A673 (cell line): ENCODE measurements at regions of chr1 and their contacts with region 1.

Region 1: GRCh38 chr1:60149251-60149650 is 75.7 kb upstream of the C1orf87 start:
- DNase-seq: peak; percentile 16
- H3K4me3 ChIP-seq: no peak overlapping the region
- H3K27ac ChIP-seq: no peak overlapping the region
- H3K4me1 ChIP-seq: no peaks in the 10 kb centered on the region
- H3K27me3 ChIP-seq: peaks cover 16% of the 10 kb centered on the region
- CTCF ChIP-seq: no peak

Region 2: GRCh38 chr1:59682396-59683080 is 466.7 kb before region 1 on chr1:
- CTCF ChIA-PET with region 1: no interaction called
- POLR2A ChIA-PET with region 1: no interaction called
- intact Hi-C with region 1: no loop called
- DNase-seq: no peak
- H3K4me3 ChIP-seq: no peak overlapping the region
- H3K27ac ChIP-seq: no peak overlapping the region
- H3K4me1 ChIP-seq: peaks cover 14% of the 10 kb centered on the region
- H3K27me3 ChIP-seq: no peaks in the 10 kb centered on the region
- CTCF ChIP-seq: no peak

Region 3: DNA sequence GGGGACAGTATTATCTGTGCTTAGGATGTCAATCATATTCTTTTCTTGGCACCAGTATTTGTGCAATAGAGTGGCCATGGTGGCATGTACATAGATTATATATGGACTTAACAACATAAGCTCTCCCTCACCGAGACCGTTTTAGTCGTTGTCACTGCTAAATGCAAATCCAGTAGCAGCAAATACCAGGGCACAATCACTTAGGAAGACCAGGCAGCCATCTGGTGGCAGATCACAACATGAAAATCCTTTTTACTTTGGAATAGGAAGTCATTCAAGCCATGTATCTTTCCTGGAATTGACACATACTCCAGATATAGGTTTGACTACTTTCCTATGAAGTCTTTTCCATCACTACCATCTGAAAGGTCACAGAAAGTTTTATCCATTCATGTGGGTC is 22.5 kb before region 1 on chr1:
- CTCF ChIA-PET with region 1: interaction called, 10 read pairs
- POLR2A ChIA-PET with region 1: no interaction called
- intact Hi-C with region 1: no loop called
- DNase-seq: peak; percentile 45
- H3K4me3 ChIP-seq: no peak overlapping the region
- H3K27ac ChIP-seq: no peak overlapping the region
- H3K4me1 ChIP-seq: no peaks in the 10 kb centered on the region
- H3K27me3 ChIP-seq: no peaks in the 10 kb centered on the region
- CTCF ChIP-seq: peak; percentile 48

Region 4: DNA sequence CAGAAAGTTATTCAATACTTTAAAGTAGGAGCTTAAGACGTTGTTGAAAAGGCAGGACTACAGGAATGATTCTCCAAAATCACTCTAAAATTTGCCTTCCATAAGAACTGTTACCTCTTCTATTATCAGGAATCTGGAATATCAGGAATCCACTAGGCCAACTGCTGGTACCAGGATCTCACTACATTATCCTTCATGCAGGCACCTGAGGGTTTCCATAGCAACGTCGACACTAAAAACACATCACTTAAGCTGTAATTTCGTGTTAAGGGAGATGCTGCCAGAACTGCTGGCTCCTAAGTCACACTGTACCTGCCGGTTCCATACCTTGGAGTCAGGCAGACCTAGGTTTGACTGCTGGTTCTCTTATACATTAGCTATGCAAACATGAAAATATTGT is 64.0 kb after region 1 on chr1:
- CTCF ChIA-PET with region 1: no interaction called
- POLR2A ChIA-PET with region 1: no interaction called
- intact Hi-C with region 1: no loop called
- DNase-seq: no peak
- H3K4me3 ChIP-seq: no peak overlapping the region
- H3K27ac ChIP-seq: no peak overlapping the region
- H3K4me1 ChIP-seq: no peaks in the 10 kb centered on the region
- H3K27me3 ChIP-seq: peaks cover 12% of the 10 kb centered on the region
- CTCF ChIP-seq: no peak

Region 5: GRCh38 chr1:60458111-60458510 is 308.9 kb after region 1 on chr1:
- CTCF ChIA-PET with region 1: no interaction called
- POLR2A ChIA-PET with region 1: no interaction called
- intact Hi-C with region 1: no loop called
- DNase-seq: no peak
- H3K4me3 ChIP-seq: no peak overlapping the region
- H3K27ac ChIP-seq: no peak overlapping the region
- H3K4me1 ChIP-seq: no peaks in the 10 kb centered on the region
- H3K27me3 ChIP-seq: no peaks in the 10 kb centered on the region
- CTCF ChIP-seq: no peak

Region 6: GRCh38 chr1:60503251-60503925 is 354.1 kb after region 1 on chr1:
- CTCF ChIA-PET with region 1: no interaction called
- POLR2A ChIA-PET with region 1: no interaction called
- intact Hi-C with region 1: loop called (anchors 10 kb)
- DNase-seq: no peak
- H3K4me3 ChIP-seq: no peak overlapping the region
- H3K27ac ChIP-seq: no peak overlapping the region
- H3K4me1 ChIP-seq: no peaks in the 10 kb centered on the region
- H3K27me3 ChIP-seq: peaks cover 80% of the 10 kb centered on the region
- CTCF ChIP-seq: no peak